ENCODE measurements at regions of chr17 and their contacts with region 1.

Region 1: GRCh38 chr17:73371285-73371684 is 59.5 kb upstream of the CDC42EP4 start:
- DNase-seq: no peak
- H3K4me3 ChIP-seq: no peak overlapping the region
- H3K4me3 Mint-ChIP-seq: no peak overlapping the region
- H3K27ac ChIP-seq: no peak overlapping the region
- H3K27ac Mint-ChIP-seq: peak overlapping the region in 1 of 7 donors; percentile 28
- H3K4me1 ChIP-seq: no peaks in the 10 kb centered on the region
- H3K4me1 Mint-ChIP-seq: no peaks in the 10 kb centered on the region
- H3K27me3 ChIP-seq: no peaks in the 10 kb centered on the region
- H3K27me3 Mint-ChIP-seq: peaks cover 9 to 14% of the 10 kb centered on the region in 2 donors

Region 2: GRCh38 chr17:72556944-72557826 is 814.1 kb before region 1 on chr17:
- CTCF ChIA-PET with region 1: interaction called, 65 read pairs
- POLR2A ChIA-PET with region 1: no interaction called
- intact Hi-C with region 1: no loop called
- DNase-seq: peak; percentile 42 to 54 (median 46)
- H3K4me3 ChIP-seq: no peak overlapping the region
- H3K4me3 Mint-ChIP-seq: no peak overlapping the region
- H3K27ac ChIP-seq: no peak overlapping the region
- H3K27ac Mint-ChIP-seq: no peak overlapping the region
- H3K4me1 ChIP-seq: no peaks in the 10 kb centered on the region
- H3K4me1 Mint-ChIP-seq: peaks cover 0 to 4% (median under 1%) of the 10 kb centered on the region in 4 donors
- H3K27me3 ChIP-seq: no peaks in the 10 kb centered on the region
- H3K27me3 Mint-ChIP-seq: peaks cover 0 to 2% of the 10 kb centered on the region in 2 donors

Region 3: DNA sequence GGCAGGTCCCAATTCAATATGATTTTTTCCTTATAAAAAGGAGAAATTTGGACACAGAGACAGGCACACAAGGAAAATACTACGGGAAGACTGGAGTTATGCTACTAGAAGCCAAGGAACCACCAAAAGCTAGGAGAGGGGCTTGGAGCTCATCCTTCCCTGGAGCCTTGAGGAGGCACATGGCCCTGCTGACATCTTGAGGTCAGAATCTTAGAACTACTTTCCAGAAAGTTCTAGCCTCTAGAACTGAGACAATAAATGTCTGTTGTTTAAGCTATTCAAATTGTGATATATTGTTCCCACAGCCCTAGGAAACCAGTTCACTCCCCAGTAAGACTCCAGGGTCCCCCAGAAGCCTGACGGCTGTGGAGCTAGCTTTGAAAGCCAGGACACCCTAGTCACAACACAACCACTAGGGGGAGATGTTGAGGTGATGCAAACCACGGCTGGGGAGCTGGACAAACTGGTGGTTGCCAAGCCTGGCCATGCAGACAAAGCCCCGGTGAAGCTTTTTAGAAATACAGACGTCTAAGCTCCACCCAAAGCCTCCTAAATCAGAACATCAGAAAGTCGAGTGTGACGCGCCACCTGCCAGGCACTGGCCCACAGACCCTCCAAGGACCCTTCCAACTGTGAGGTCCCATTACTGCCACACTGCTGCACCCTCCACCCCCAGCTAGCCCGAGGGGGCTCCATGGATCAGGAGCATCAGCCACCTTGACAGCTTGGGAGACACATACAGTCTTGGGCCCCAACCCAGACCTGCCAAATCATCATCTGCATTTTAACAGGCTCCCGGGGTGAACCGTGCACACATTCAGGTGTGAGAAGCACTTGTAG is 385.2 kb before region 1 on chr17:
- CTCF ChIA-PET with region 1: interaction called, 12 read pairs
- POLR2A ChIA-PET with region 1: no interaction called
- intact Hi-C with region 1: loop called (anchors 2 kb)
- DNase-seq: peak in 4 of 5 donors; percentile 42 to 49 (median 44)
- H3K4me3 ChIP-seq: no peak overlapping the region
- H3K4me3 Mint-ChIP-seq: no peak overlapping the region
- H3K27ac ChIP-seq: no peak overlapping the region
- H3K27ac Mint-ChIP-seq: no peak overlapping the region
- H3K4me1 ChIP-seq: no peaks in the 10 kb centered on the region
- H3K4me1 Mint-ChIP-seq: peaks cover 0 to 3% (median under 1%) of the 10 kb centered on the region in 4 donors
- H3K27me3 ChIP-seq: no peaks in the 10 kb centered on the region
- H3K27me3 Mint-ChIP-seq: no peaks in the 10 kb centered on the region

Region 4: GRCh38 chr17:73255671-73256181 is 115.6 kb before region 1 on chr17:
- CTCF ChIA-PET with region 1: interaction called, 185 read pairs
- POLR2A ChIA-PET with region 1: no interaction called
- intact Hi-C with region 1: loop called (anchors 1 kb)
- DNase-seq: peak in 4 of 5 donors; percentile 32 to 49 (median 40)
- H3K4me3 ChIP-seq: no peak overlapping the region
- H3K4me3 Mint-ChIP-seq: no peak overlapping the region
- H3K27ac ChIP-seq: no peak overlapping the region
- H3K27ac Mint-ChIP-seq: peak overlapping the region in 2 of 7 donors; percentile 36 to 58
- H3K4me1 ChIP-seq: no peaks in the 10 kb centered on the region
- H3K4me1 Mint-ChIP-seq: peaks cover 0 to 5% (median 2%) of the 10 kb centered on the region in 4 donors
- H3K27me3 ChIP-seq: no peaks in the 10 kb centered on the region
- H3K27me3 Mint-ChIP-seq: peaks cover 0 to 2% of the 10 kb centered on the region in 2 donors

Region 5: GRCh38 chr17:73311781-73312641 is 59.3 kb before region 1 on chr17 and contains the start of gene CDC42EP4:
- CTCF ChIA-PET with region 1: interaction called, 15 read pairs
- POLR2A ChIA-PET with region 1: no interaction called
- intact Hi-C with region 1: loop called (anchors 1 kb)
- DNase-seq: peak; percentile 81 to 88 (median 81)
- H3K4me3 ChIP-seq: peak within 1 kb of the TSS; percentile 57 to 80
- H3K4me3 Mint-ChIP-seq: peak within 1 kb of the TSS; percentile 85 to 92 (median 88)
- H3K27ac ChIP-seq: peak within 1 kb of the TSS; percentile 63
- H3K27ac Mint-ChIP-seq: peak within 1 kb of the TSS; percentile 73 to 88 (median 82)
- H3K4me1 ChIP-seq: peaks cover 15% of the 10 kb centered on the region
- H3K4me1 Mint-ChIP-seq: peaks cover 6 to 19% (median 13%) of the 10 kb centered on the region in 4 donors
- H3K27me3 ChIP-seq: no peaks in the 10 kb centered on the region
- H3K27me3 Mint-ChIP-seq: no peaks in the 10 kb centered on the region
- total RNA-seq, gene CDC42EP4: 1.1 to 1.4 TPM